Adrenal gland (tissue), 19 donors: ENCODE measurements at regions of chr17 and their contacts with region 1.

Region 1: DNA sequence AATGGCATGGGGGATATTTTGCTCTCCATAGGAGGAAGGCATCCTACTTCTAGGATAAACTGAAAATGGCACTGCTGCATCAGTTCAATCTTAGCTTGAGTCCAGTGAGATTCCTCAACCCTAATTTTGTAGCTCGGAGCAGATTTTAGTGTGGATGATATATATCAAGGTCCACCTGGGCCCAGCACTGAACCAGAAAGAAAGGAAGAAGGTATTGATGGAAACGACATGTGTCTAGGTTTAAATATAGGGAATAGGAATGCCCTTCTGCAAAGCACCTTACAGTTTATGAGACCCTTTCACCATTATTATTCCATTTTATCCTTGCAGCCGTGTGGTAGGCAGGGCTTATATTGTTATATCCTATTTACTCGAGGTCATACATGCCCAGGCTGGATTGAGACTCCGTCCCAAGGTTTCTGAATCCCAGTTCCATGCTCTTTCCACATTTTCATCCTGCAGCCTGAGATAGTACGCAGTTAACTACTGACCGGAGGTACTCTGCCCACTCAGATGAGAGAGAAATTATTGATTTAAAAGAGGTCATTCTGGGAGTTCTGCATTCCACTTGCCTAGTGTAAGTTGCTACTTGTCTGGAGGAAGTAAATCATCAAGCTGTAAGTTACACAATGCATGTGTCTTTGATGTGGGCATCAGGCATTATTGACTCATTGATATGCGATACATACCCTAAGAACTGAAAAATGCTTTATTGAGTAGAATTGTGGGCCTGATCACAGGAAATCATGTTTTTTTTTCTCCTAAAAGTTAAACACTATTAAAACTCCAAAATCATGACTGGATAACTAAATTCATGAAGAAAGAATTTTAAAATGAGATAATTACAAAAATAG is 10.1 kb downstream of the KRT39 start:
- DNase-seq: no peak
- H3K4me3 ChIP-seq: no peak overlapping the region
- H3K27ac ChIP-seq: no peak overlapping the region
- H3K4me1 ChIP-seq: no peaks in the 10 kb centered on the region
- H3K27me3 ChIP-seq: no peaks in the 10 kb centered on the region
- CTCF ChIP-seq: no peak
- POLR2A ChIP-seq: no peak

Region 2: GRCh38 chr17:40909351-40909750 is 47.3 kb before region 1 on chr17:
- intact Hi-C with region 1: no loop called
- DNase-seq: peak; percentile 76 to 94 (median 90)
- H3K4me3 ChIP-seq: no peak overlapping the region
- H3K27ac ChIP-seq: no peak overlapping the region
- H3K4me1 ChIP-seq: peaks cover 0 to 9% of the 10 kb centered on the region in 2 donors
- H3K27me3 ChIP-seq: peaks cover 8% of the 10 kb centered on the region
- CTCF ChIP-seq: peak; percentile 58 to 96 (median 80)
- POLR2A ChIP-seq: no peak

Region 3: DNA sequence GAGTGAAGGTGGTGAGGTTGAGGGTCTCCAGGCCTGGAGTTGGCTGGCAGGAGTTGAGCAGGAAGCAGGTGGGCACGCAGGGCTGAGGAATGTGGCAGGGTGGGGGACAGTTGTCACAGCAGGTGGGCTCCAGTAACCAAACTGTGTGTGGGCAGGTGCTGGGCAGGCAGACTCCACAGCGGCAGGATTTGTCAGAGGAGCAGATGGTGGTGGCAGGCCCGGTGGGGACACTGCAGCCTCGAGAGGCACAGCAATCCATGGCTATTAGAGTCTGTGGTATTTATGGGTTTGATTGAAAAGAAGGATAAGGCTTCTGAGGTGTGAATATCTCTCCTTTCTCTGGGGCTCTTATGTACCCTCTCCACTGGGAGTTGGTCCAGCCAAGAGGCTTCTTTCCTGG is 37.2 kb after region 1 on chr17 and contains the start of gene KRTAP3-3:
- intact Hi-C with region 1: no loop called
- DNase-seq: no peak
- H3K4me3 ChIP-seq: no peak within 1 kb of the TSS
- H3K27ac ChIP-seq: no peak within 1 kb of the TSS
- H3K4me1 ChIP-seq: no peaks in the 10 kb centered on the region
- H3K27me3 ChIP-seq: peaks cover 5% of the 10 kb centered on the region
- CTCF ChIP-seq: no peak
- POLR2A ChIP-seq: no peak
- total RNA-seq, gene KRTAP3-3: not detected

Region 4: DNA sequence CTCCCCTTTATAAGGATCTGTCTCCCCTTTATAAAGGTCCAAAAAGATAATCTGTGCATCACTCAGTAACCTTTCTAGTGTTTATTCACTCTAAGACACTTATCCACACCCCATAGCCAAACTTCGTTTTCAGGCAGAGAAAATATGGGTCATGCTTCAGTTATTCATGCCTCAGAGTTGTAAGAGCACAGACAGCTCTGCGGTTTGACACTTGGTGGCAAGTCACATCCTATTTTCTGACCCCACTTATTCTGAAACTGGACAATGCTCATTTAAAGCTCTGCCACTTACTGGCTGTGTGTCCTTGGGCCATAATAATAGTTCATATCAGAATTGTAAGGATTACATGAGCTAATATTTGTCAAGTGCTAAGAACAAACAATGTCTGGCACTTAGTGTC is 92.5 kb after region 1 on chr17:
- intact Hi-C with region 1: no loop called
- DNase-seq: no peak
- H3K4me3 ChIP-seq: no peak overlapping the region
- H3K27ac ChIP-seq: no peak overlapping the region
- H3K4me1 ChIP-seq: no peaks in the 10 kb centered on the region
- H3K27me3 ChIP-seq: no peaks in the 10 kb centered on the region
- CTCF ChIP-seq: no peak
- POLR2A ChIP-seq: no peak

Region 5: DNA sequence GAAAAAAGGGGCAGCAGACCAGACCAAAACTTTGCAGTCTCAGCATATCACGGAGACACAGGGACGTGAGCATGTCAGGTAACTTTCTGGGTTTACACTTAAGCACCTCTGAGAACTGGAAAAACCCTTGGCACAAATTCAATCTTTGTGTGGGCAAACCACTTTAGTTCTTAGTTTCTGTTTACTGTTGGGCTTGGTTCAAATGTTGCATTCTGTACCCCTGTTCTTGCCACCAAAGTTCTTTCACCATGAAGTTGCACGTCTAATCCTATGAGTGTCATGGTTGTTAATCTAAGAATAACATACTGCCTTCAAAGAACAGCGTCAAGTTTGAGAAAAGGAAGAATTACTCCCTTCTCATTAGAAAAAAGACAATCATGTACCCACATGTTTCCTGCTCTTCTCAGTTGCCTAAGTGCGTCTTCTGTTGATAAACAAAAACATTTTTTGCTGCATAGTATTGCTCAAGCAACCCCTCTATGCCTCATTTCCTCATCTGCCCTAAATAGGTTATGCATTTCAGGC is 382.4 kb after region 1 on chr17:
- intact Hi-C with region 1: loop called in 1 of 2 experiments (anchors 10 kb)
- DNase-seq: no peak
- H3K4me3 ChIP-seq: no peak overlapping the region
- H3K27ac ChIP-seq: no peak overlapping the region
- H3K4me1 ChIP-seq: no peaks in the 10 kb centered on the region
- H3K27me3 ChIP-seq: no peaks in the 10 kb centered on the region
- CTCF ChIP-seq: no peak
- POLR2A ChIP-seq: no peak